Activated naive CD4-positive, alpha-beta T cell treated with anti-CD3 and anti-CD28 coated beads for 36 hours (primary cell): ENCODE measurements at regions of chr12 and their contacts with region 1.

Region 1: GRCh38 chr12:92408072-92408900 is 262.6 kb upstream of the BTG1 start:
- DNase-seq: peak; percentile 79
- H3K4me3 Mint-ChIP-seq: no peak overlapping the region
- H3K27ac Mint-ChIP-seq: peak overlapping the region; percentile 71
- H3K4me1 Mint-ChIP-seq: peaks cover 64% of the 10 kb centered on the region
- H3K27me3 Mint-ChIP-seq: no peaks in the 10 kb centered on the region

Region 2: DNA sequence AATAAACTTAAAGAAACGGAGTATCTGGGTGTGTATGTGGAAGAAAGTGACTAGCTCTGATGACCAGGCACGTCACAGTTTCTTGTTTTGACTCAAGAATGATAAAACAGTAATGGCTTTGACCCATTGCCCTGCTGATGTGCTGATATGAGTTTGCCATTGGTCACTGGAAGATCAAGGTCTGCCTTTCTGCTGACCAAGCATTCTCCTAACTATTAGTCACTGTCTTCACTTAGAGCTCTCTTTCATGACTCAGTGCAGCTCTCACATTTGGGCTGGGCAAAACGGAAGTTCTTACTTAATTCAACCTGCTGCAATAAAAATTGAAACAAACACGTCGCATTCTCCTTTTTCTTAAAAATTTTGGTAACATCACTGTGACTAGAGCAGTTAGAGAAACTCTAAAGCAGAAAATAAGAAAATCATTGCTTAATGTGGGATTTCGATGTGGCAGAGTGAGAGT is 629.3 kb before region 1 on chr12:
- CTCF ChIA-PET with region 1: interaction called, 3 read pairs
- intact Hi-C with region 1: loop called (anchors 10 kb)
- DNase-seq: peak; percentile 68
- H3K4me3 Mint-ChIP-seq: peak overlapping the region; percentile 58
- H3K27ac Mint-ChIP-seq: peak overlapping the region; percentile 77
- H3K4me1 Mint-ChIP-seq: peaks cover 46% of the 10 kb centered on the region
- H3K27me3 Mint-ChIP-seq: no peaks in the 10 kb centered on the region

Region 3: DNA sequence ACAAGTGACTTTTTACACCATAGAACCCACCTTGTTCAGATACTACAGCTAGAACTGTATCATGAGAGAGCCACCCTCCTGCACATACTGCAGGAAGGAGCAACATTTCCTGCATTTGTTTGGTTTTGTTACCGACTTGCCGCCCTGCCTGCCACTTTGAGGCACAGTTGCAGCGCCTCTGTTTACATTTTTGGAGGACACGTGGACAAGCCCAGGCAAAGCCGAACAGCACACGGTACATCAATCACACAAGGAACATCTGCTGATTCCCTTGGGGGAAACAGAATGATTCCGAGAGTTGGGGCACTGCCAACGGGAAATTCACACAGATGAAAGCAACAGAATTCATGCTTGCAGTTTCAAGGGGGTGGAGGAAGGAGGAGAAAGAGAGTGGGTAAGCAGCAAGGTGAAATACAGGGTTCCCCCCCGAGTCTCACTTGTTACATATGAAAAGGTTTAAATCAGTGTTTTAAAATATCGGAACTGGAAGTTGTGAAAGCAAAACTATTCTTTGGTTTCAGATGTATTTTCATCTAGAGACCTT is 373.4 kb before region 1 on chr12:
- CTCF ChIA-PET with region 1: no interaction called
- intact Hi-C with region 1: loop called (anchors 5 kb)
- DNase-seq: peak; percentile 86
- H3K4me3 Mint-ChIP-seq: peak overlapping the region; percentile 78
- H3K27ac Mint-ChIP-seq: peak overlapping the region; percentile 93
- H3K4me1 Mint-ChIP-seq: peaks cover 83% of the 10 kb centered on the region
- H3K27me3 Mint-ChIP-seq: no peaks in the 10 kb centered on the region

Region 4: DNA sequence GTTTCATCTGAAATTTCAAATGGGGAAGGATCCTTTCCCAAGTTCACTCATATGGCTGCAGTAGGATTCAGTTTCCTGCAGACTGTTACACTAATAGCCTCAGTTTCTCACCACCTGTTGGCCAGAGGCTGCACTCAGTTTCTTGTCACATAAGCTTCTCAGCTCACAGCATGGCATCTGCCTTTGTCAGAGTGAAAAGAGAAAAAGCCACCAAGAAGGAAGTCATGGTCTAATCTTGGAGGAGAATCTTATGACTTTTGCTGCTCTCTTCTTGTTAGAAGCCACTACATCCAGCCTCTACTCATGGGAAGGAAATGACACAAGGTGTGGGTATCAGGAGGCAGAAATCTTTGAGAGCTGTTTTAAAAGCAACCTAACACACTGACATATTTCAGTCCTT is 223.2 kb before region 1 on chr12:
- CTCF ChIA-PET with region 1: no interaction called
- intact Hi-C with region 1: loop called (anchors 1 kb)
- DNase-seq: peak; percentile 62
- H3K4me3 Mint-ChIP-seq: peak overlapping the region; percentile 36
- H3K27ac Mint-ChIP-seq: peak overlapping the region; percentile 89
- H3K4me1 Mint-ChIP-seq: peaks cover 64% of the 10 kb centered on the region
- H3K27me3 Mint-ChIP-seq: no peaks in the 10 kb centered on the region

Region 5: DNA sequence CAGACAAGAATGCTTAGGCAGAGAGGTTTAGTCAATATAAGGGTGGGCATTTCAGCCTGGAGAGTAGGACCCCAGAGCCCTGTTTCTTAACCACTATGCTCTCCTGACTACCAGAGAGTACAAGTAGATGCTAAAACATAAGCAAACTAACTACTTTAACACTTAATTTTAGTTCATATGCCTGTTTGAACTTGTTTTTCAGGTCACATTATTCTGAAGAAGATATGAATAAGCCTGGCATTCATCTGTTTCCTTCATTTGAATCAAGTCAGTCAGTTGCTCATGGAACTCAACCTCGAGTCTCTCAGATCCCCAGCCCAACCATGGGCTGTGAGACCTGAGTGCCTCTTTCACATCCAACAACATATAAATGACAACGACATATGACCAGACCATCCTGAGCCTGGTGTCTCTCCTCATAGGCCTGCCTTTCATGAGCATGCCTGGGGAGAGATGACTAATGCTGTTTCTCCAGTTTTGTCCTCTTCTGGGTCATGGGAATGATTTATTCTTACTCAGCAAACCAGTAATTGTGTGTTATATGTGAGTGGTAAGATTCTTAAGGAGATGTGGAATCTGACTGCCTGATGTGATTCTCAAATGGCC is 11.5 kb before region 1 on chr12:
- CTCF ChIA-PET with region 1: interaction called, 7 read pairs
- intact Hi-C with region 1: loop called (anchors 1 kb)
- DNase-seq: peak; percentile 39
- H3K4me3 Mint-ChIP-seq: no peak overlapping the region
- H3K27ac Mint-ChIP-seq: peak overlapping the region; percentile 73
- H3K4me1 Mint-ChIP-seq: peaks cover 97% of the 10 kb centered on the region
- H3K27me3 Mint-ChIP-seq: no peaks in the 10 kb centered on the region

Region 6: DNA sequence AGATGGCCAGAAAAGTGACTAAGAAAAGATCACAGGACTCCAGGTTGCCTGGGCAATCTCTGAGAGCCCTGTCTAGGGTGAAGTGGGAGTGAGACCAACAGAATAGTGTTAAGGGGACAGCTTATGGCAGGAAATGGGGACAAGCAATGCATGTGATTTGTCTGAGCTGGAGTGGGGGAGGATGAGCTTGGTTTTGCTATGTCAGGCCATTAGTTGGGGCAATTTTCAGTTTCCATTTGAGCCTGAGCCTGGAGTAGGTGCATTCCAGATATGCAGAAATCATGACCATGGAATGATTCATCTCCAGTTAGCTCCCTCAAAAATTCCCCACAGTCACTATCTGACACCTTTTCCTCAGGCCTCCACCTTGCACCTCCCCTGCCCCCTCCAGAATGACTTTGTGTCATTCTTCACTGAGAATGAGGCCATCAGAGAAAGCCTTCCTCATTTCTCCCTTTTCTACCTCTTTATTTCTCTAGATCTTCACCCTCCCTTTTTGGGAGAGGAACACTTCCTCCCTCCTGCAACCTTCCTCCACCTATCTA is 143.6 kb after region 1 on chr12:
- CTCF ChIA-PET with region 1: interaction called, 6 read pairs
- intact Hi-C with region 1: loop called (anchors 1 kb)
- DNase-seq: peak; percentile 83
- H3K4me3 Mint-ChIP-seq: no peak overlapping the region
- H3K27ac Mint-ChIP-seq: no peak overlapping the region
- H3K4me1 Mint-ChIP-seq: peaks cover 38% of the 10 kb centered on the region
- H3K27me3 Mint-ChIP-seq: no peaks in the 10 kb centered on the region